ENCODE measurements at regions of chr12 and their contacts with region 1.

Region 1: DNA sequence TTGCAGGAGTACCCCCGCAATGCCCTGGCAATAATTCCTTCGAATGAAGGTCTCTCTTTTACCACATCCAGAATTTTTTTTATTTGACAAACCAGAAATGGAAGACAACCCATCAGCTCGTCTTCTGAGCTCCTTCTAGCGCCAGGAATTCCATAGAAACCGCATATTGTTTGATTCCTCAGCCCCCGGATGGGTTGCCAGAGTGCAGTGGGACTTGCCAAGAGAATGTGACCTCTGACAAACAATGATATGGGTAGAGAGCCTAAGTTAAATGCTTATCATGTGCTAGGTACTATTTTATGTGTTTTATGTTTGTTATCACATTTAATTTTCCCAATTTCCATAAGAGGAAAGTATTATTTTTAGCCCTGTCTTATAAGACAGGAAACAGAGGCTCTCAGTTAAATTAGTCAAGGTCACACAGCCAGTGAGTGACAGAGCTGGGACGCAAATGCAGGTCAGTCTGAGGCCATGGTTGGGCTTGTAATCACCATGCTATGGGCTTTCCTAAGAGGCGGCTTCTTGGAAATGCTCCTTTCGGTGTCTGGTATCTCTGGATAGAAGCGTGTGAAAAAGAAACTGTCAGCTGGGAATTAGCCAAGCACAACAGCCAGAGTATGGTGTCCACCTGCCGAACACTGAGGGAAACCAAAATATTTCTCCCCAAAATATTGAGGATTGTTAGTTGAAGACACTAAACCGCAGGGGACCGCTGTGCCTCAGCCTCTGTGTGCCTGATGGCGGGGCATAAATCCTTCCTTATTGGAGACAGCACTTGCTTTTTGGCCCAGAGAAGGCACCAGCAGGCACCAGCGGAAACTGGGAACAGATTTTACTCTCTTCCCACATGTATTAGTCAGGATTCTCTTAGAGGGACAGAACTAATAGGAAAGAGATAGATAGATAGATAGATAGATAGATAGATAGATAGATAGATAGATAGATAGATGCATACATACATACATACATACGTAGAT is 29.4 kb upstream of the ETFBKMT start:
- DNase-seq: peak; percentile 85
- H3K4me3 ChIP-seq: no peak overlapping the region
- H3K27ac ChIP-seq: no peak overlapping the region
- H3K27me3 ChIP-seq: no peaks in the 10 kb centered on the region
- CTCF ChIP-seq: peak; percentile 15

Region 2: DNA sequence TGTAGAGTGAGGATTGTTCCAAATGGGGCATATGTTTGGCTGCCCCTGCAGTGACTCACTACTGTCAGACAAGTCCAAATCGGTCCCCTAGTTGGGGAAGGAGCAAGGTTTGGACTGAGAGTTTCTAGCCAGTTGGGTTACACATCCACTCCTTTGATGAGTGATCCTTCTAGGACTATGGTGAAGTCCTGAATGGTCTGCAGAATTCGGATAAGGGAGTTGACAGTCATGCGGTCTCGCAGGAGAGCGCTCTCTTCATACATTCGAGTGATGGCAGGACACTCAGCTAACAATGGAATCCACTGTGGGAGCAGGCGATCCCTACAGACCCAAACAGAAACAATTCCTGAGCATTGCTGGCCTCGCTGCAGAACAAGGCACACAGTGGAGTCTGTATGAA is 242.6 kb before region 1 on chr12:
- in situ Hi-C with region 1: loop called (anchors 25 kb)
- DNase-seq: no peak
- H3K4me3 ChIP-seq: no peak overlapping the region
- H3K27ac ChIP-seq: no peak overlapping the region
- H3K27me3 ChIP-seq: no peaks in the 10 kb centered on the region
- CTCF ChIP-seq: no peak

Measured in brain microvascular endothelial cell (primary cell).